Cardiac septum (tissue), 1 donor: ENCODE measurements at regions of chr3 and their contacts with region 1.

Region 1: DNA sequence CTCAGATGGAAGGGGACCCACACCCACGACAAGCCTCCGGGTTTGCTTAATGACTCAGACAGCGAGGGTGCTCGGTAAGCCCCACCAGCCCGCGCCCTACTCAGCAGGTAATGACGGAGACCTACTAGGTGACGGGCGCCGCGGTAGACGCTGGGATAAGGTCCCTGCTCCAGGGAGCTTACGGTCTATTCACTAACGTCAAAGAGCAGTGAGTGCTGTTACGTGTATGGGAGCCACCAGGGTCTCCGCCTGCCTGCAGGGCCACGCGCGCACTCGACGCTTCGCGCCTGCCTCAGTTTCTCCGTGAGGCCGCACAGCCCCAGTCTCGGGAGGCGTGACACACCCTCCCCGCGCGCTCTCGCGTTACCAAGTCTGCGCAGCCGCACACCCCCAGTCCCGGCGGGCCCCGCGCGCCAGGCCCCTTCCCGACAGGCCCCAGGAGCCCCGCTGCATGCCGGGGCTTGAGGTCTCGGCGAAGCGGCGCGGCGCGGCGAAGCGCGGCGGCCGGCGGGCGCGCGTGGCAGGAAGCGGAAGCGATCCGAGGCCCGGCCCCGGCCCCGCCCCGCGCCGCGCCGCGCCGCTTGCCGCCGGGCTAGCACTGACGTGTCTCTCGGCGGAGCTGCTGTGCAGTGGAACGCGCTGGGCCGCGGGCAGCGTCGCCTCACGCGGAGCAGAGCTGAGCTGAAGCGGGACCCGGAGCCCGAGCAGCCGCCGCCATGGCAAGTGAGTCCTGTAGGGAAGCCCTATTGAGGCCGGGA is at the start of gene SEC61A1:
- DNase-seq: peak; percentile 97
- total RNA-seq, gene SEC61A1: 91.3 TPM

Region 2: DNA sequence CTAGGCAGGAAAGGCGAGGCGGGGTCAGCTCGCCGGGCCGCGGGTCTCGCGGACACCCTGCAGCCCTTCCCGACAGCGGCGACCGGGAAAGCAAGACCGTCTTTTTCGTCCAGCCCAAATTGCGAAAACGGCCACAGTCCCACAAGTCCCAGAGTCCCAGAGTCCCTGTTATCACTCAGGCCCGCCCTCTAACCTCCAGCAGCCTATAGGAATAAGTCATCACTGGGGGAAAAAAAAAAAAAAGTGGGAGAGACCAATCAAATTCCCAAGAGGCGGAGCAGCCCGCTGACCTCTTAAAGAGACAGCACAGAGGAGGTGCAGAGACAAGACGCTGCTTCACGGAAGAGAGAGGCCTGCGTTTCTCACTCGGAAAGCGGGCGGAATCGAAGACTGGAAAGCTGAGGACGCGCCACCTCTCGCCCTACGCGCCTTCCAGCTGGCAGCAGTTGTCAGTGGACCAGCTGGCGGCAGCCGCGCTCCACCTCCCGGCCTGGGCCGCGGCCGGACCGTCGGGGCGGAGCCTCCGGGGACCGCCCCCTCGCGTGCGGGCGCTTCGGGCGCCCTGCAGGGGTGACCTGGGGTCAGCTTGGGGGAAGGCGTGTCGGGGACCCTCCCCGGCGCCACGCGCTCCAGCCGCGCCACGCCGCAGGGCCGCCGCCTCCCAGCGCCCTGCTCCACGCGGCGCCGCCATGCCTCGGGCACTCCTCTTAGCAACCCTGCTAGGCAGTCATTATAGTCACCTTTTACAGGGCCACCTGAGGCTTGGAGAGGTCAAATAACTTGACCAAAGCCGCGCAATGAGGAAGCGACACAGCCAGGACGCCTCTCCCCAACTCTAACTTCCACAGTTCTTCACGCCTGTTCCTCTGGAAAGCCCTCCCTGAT is 461.2 kb before region 1 on chr3 and contains the start of gene TPRA1:
- intact Hi-C with region 1: loop called (anchors 5 kb)
- DNase-seq: peak; percentile 93
- total RNA-seq, gene TPRA1: 17.3 TPM

Region 3: GRCh38 chr3:127831723-127832172 is 220.3 kb before region 1 on chr3:
- intact Hi-C with region 1: no loop called
- DNase-seq: no peak

Region 4: GRCh38 chr3:127929824-127930413 is 122.1 kb before region 1 on chr3:
- intact Hi-C with region 1: loop called (anchors 10 kb)
- DNase-seq: no peak

Region 5: DNA sequence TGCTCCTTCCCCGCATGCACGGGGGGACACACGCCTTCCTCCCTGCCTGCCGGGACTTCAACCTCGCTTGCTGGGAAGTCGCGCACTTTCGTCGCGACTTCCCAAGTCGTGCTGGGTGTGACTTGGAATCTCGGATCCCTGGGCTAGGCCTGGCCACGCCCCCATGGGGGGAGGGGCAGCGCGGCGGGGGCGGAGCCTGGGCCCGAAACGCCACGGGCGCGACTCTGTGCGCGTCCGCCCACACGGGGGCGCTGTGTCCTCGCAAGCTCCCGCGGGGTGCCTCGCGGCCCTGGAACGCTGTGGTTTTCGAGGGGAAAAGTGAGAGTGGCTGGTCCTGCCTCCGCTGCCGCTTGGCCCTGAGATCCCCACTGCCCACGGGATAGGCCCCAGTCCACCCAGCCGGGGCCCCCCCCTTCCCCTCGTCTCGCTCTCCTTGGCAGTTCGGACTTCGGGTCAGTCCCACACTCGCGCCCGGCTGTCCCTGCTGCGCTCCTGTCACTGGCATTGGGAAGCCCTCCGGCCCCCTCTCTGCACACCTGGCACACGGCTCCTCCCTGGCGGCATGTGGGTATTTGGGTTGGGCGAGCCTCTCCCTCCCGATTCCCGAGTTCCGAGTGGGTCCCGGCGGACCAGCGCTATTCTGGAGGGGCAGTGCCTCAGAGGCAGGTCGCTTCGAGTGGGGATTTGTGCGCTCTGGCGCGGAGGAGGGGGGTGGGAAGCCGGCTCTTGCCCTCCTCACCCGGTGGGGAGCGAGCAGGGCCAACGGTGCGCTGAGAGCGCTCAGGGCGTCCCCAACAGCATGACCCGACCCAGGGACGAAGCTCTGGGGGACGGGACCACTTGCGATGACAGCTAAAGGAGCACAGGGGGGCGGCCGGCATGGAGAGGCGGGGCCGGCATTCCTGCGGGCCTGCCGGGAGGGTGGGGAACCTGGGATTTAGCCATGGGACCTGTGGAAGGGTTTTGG is 23.8 kb after region 1 on chr3:
- intact Hi-C with region 1: loop called (anchors 1 kb)
- DNase-seq: peak; percentile 95

Region 6: DNA sequence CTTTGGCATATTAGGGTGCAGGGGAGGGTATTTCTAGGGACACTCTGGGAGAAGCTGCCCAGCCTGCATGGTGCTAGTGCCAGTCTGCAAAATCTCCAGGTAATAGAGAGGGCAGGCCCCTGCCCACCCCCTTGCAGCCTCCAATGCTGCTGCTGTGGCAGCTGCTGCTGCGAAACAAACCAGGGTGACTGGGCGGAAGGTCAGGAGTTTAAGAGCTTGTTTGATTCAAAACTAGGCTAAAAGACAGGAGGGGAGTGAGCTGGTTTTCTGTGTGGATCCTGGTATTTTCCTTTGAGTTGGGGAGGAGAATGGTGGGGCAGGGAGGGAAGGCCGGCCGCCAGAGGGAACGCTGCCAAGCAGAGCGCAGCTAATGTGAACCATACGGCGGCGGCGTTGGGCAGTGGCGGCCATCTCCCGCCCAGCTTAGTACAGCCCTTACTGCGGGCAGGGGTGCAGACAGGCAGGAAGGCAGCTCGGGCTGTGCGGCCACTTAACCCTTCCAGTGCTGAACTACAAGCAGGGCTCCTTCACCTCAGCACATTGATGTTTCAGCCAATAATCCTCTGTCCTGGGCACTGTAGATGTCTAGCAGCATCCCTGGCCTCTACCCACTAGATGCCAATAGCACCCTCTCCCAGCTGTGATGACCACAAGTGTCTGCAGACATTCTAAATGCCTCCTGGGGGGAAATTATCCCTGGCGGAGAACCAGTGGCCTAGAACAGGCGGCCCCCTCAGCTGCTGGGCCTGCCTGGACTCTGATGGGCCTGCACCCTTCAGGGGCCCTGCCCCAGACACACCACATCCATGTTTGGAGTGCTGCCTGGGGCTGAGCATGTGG is 227.0 kb after region 1 on chr3:
- intact Hi-C with region 1: no loop called
- DNase-seq: peak; percentile 72